ENCODE measurements at regions of chr1 and their contacts with region 1.

Region 1: DNA sequence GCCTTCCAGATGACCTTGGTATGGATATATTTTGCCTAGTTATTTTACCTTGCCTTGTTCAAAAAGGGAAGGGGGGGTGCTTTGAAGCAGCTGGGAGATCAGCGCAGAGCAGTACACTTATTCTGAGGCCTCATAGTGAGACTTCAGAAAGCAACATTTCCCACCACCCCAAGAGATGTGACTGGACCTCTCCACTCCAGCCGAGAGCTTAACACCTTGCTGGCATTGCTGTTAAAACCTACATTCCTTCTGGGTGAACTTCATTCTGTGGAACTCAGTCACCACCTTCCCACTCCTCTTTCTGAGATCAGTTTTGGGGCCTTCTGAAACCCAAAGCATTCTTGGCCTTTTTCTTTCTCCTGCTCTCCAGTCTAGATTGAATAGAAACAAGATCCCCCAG is 148.7 kb downstream of the BARHL2 start:
- DNase-seq: no peak
- ATAC-seq: no peak
- H3K4me3 ChIP-seq: no peak overlapping the region
- H3K4me3 Mint-ChIP-seq: no peak overlapping the region
- H3K27ac ChIP-seq: no peak overlapping the region
- H3K27ac Mint-ChIP-seq: no peak overlapping the region
- H3K4me1 ChIP-seq: no peaks in the 10 kb centered on the region
- H3K4me1 Mint-ChIP-seq: no peaks in the 10 kb centered on the region
- H3K27me3 ChIP-seq: no peaks in the 10 kb centered on the region
- H3K27me3 Mint-ChIP-seq: no peaks in the 10 kb centered on the region
- CTCF ChIP-seq: no peak

Region 2: GRCh38 chr1:90579212-90579802 is 10.9 kb after region 1 on chr1:
- CTCF ChIA-PET with region 1: interaction called, 21 read pairs
- POLR2A ChIA-PET with region 1: no interaction called
- intact Hi-C with region 1: no loop called
- DNase-seq: peak; percentile 50
- ATAC-seq: no peak
- H3K4me3 ChIP-seq: no peak overlapping the region
- H3K4me3 Mint-ChIP-seq: no peak overlapping the region
- H3K27ac ChIP-seq: no peak overlapping the region
- H3K27ac Mint-ChIP-seq: no peak overlapping the region
- H3K4me1 ChIP-seq: no peaks in the 10 kb centered on the region
- H3K4me1 Mint-ChIP-seq: no peaks in the 10 kb centered on the region
- H3K27me3 ChIP-seq: no peaks in the 10 kb centered on the region
- H3K27me3 Mint-ChIP-seq: peaks cover 15% of the 10 kb centered on the region
- CTCF ChIP-seq: peak; percentile 83